ENCODE measurements at regions of chr16 and their contacts with region 1.

Region 1: GRCh38 chr16:6177616-6178180 is 1080.1 kb upstream of the EEF2KMT start:
- DNase-seq: no peak
- ATAC-seq: no peak
- H3K4me3 ChIP-seq: no peak overlapping the region
- H3K27ac ChIP-seq: no peak overlapping the region
- H3K4me1 ChIP-seq: no peaks in the 10 kb centered on the region
- H3K27me3 ChIP-seq: no peaks in the 10 kb centered on the region
- CTCF ChIP-seq: no peak

Region 2: GRCh38 chr16:6209355-6209930 is 31.7 kb after region 1 on chr16:
- intact Hi-C with region 1: no loop called
- DNase-seq: no peak
- ATAC-seq: no peak
- H3K4me3 ChIP-seq: no peak overlapping the region
- H3K27ac ChIP-seq: no peak overlapping the region
- H3K4me1 ChIP-seq: no peaks in the 10 kb centered on the region
- H3K27me3 ChIP-seq: no peaks in the 10 kb centered on the region
- CTCF ChIP-seq: no peak

Region 3: GRCh38 chr16:6232056-6232455 is 54.4 kb after region 1 on chr16:
- intact Hi-C with region 1: loop called in 1 of 2 experiments (anchors 10 kb)
- DNase-seq: no peak
- ATAC-seq: no peak
- H3K4me3 ChIP-seq: no peak overlapping the region
- H3K27ac ChIP-seq: no peak overlapping the region
- H3K4me1 ChIP-seq: no peaks in the 10 kb centered on the region
- H3K27me3 ChIP-seq: no peaks in the 10 kb centered on the region
- CTCF ChIP-seq: no peak

Measured in psoas muscle (tissue), 8 donors.